Tibial artery (tissue), 4 donors: ENCODE measurements at regions of chr10 and their contacts with region 1.

Region 1: GRCh38 chr10:122216047-122216446 is 55.0 kb upstream of the BTBD16 start:
- DNase-seq: no peak
- H3K4me3 ChIP-seq: no peak overlapping the region
- H3K27ac ChIP-seq: no peak overlapping the region
- H3K4me1 ChIP-seq: no peaks in the 10 kb centered on the region
- H3K27me3 ChIP-seq: no peaks in the 10 kb centered on the region
- CTCF ChIP-seq: no peak

Region 2: GRCh38 chr10:122057841-122058413 is 158.1 kb before region 1 on chr10:
- intact Hi-C with region 1: loop called (anchors 2 kb)
- DNase-seq: no peak
- H3K4me3 ChIP-seq: no peak overlapping the region
- H3K27ac ChIP-seq: no peak overlapping the region
- H3K4me1 ChIP-seq: peaks cover 2 to 18% (median 7%) of the 10 kb centered on the region in 4 donors
- H3K27me3 ChIP-seq: no peaks in the 10 kb centered on the region
- CTCF ChIP-seq: no peak